ENCODE measurements at regions of chr14 and their contacts with region 1.

Region 1: DNA sequence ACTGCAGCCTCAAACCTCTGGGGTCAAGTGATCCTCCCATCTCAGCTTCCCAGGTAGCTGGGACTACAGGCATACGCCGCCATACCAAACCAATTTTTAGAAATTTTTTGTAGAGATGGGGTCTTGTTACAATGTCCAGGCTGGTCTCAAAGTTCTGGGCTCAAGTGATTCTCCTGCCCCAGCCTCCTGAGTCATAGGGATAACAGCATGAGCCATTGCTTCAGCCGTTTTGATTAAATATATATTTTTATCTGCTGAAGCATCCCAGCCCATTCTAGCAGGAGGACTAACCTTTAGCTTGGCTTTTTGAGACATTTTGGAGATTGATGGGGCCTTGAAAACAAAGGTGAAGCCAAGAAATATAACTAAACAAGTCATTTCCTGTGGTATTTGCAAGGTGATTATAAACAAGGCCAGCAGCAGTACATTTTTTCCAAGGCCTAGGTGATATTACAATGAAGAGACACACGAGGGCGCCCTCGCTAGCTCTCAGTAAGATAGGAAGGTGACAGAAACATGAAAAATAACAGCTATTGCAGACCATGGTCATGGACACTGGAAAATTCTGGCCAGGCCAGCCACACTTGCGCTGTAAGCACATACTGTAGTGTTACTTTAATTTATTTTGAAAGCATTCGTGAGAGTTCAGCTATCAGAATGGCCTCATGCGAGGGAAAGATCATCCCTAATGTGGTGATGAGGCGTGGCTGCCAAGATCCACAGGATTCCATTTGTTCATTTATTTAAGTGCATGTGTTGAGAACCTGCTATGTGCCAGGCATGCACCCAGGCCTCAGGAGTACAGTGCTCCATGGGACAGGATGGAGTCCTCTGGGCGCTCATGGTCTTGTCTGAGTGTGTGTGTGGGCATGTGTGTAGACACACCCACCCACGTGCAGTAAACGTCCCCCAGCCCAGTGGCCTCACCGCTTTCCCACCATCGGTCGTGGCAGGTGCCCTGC is 63.5 kb downstream of the DGLUCY start:
- DNase-seq: peak; percentile 31
- ATAC-seq: peak; percentile 77
- H3K4me3 ChIP-seq: no peak overlapping the region
- H3K27ac ChIP-seq: no peak overlapping the region
- H3K4me1 ChIP-seq: no peaks in the 10 kb centered on the region
- H3K27me3 ChIP-seq: no peaks in the 10 kb centered on the region
- CTCF ChIP-seq: peak; percentile 46 to 87 (median 74); a peak in 5 of 6 replicates
- POLR2A ChIP-seq: no peak
- RAD21 ChIP-seq: peak; percentile 57

Region 2: DNA sequence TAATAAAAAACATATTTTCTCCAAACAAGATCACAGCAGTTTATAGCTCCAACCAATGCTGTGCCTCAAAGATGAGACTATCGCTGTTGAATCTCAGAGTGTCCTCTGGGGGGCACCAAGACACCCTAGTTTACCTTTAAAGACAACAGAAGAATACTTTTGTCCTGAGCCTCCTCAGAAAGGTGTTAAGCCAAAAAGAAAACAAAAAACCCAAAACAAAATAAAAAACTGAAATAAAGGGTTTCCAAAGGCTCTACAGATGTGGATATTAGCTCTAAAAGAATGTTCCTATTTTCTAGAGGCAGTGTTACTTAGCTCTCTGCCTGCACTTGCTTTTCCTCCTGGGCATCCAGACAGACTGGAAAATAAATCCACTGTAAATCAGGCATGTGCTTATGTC is 274.3 kb before region 1 on chr14:
- CTCF ChIA-PET with region 1: interaction called, 54 read pairs
- POLR2A ChIA-PET with region 1: interaction called, 3 read pairs
- RAD21 ChIA-PET with region 1: interaction called, 12 read pairs
- intact Hi-C with region 1: loop called (anchors 1 kb)
- DNase-seq: peak; percentile 45
- ATAC-seq: peak; percentile 98
- H3K4me3 ChIP-seq: no peak overlapping the region
- H3K27ac ChIP-seq: no peak overlapping the region
- H3K4me1 ChIP-seq: peaks cover 0 to 4% of the 10 kb centered on the region in 2 experiments; a peak in 2 of 4 replicates
- H3K27me3 ChIP-seq: no peaks in the 10 kb centered on the region
- CTCF ChIP-seq: peak; percentile 77 to 86 (median 80)
- POLR2A ChIP-seq: no peak
- RAD21 ChIP-seq: peak; percentile 90

Region 3: DNA sequence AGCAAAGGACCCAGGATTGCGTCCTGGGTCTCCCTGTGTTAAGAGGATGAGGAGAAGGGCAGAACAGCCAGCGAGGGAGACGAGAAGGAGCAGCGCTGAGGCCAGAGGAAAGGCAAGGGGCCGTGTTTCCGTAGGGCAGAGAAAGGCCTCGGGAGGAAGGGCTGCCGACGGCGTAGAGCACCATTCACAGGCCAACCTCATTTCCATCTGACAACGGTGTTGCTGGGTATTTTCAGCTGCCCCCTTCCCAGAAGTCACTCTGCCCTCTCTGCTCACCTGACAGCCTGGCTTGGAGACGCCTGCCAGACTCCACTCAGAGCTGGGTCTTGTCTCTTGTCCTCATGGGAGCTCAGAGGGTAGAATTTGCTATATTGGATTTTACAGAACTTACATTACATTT is 15.7 kb after region 1 on chr14:
- CTCF ChIA-PET with region 1: interaction called, 10 read pairs
- POLR2A ChIA-PET with region 1: no interaction called
- RAD21 ChIA-PET with region 1: no interaction called
- intact Hi-C with region 1: no loop called
- DNase-seq: no peak
- ATAC-seq: no peak
- H3K4me3 ChIP-seq: no peak overlapping the region
- H3K27ac ChIP-seq: no peak overlapping the region
- H3K4me1 ChIP-seq: no peaks in the 10 kb centered on the region
- H3K27me3 ChIP-seq: no peaks in the 10 kb centered on the region
- CTCF ChIP-seq: no peak
- POLR2A ChIP-seq: no peak
- RAD21 ChIP-seq: no peak

Region 4: GRCh38 chr14:91241863-91242262 is 64.5 kb after region 1 on chr14:
- CTCF ChIA-PET with region 1: no interaction called
- POLR2A ChIA-PET with region 1: no interaction called
- RAD21 ChIA-PET with region 1: no interaction called
- intact Hi-C with region 1: no loop called
- DNase-seq: no peak
- ATAC-seq: no peak
- H3K4me3 ChIP-seq: no peak overlapping the region
- H3K27ac ChIP-seq: no peak overlapping the region
- H3K4me1 ChIP-seq: no peaks in the 10 kb centered on the region
- H3K27me3 ChIP-seq: no peaks in the 10 kb centered on the region
- CTCF ChIP-seq: no peak
- POLR2A ChIP-seq: no peak
- RAD21 ChIP-seq: no peak

Region 5: GRCh38 chr14:91264151-91265150 is 87.1 kb after region 1 on chr14:
- CTCF ChIA-PET with region 1: no interaction called
- POLR2A ChIA-PET with region 1: no interaction called
- RAD21 ChIA-PET with region 1: no interaction called
- intact Hi-C with region 1: no loop called
- DNase-seq: no peak
- ATAC-seq: no peak
- H3K4me3 ChIP-seq: no peak overlapping the region
- H3K27ac ChIP-seq: no peak overlapping the region
- H3K4me1 ChIP-seq: no peaks in the 10 kb centered on the region
- H3K27me3 ChIP-seq: no peaks in the 10 kb centered on the region
- CTCF ChIP-seq: no peak
- POLR2A ChIP-seq: no peak
- RAD21 ChIP-seq: no peak

Region 6: GRCh38 chr14:91286530-91286937 is 109.2 kb after region 1 on chr14:
- CTCF ChIA-PET with region 1: interaction called, 20 read pairs
- POLR2A ChIA-PET with region 1: no interaction called
- RAD21 ChIA-PET with region 1: interaction called, 3 to 6 read pairs
- intact Hi-C with region 1: loop called (anchors 1 kb)
- DNase-seq: peak; percentile 49
- ATAC-seq: peak; percentile 94
- H3K4me3 ChIP-seq: no peak overlapping the region
- H3K27ac ChIP-seq: no peak overlapping the region
- H3K4me1 ChIP-seq: no peaks in the 10 kb centered on the region; a peak in 1 of 4 replicates
- H3K27me3 ChIP-seq: no peaks in the 10 kb centered on the region
- CTCF ChIP-seq: peak; percentile 79 to 95 (median 88)
- POLR2A ChIP-seq: no peak
- RAD21 ChIP-seq: peak; percentile 79

Measured in HCT116 (cell line).